Caco-2 (cell line): ENCODE measurements at regions of chr22 and their contacts with region 1.

Region 1: DNA sequence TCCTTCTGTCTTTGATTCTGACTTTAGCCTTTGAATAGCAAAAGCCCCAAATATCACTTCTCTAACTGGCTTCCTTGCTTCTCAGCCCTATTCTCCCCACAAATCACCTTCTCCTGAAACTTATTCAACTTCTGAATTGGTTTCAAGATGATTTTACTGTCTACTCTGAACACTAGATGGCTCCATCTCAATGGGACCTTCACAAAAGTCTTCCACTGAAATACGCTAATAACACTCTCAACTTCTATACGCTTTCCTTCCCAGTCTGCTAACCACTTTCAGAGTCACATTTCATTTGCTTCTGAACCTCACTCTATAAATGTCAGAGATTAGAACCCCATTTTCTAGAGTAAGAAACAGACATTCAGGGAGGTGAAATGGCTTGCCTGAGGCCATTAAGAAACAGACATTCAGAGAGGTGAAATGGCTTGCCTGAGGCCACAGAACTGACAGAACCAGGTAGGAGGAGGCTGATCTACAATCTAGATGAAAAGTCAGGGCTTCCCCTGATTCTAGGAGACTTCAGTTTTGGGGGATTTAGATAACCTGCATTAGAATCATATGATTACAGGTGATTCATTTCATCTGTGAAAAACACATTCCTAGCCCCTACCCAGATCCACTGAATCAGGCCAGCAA is 20.6 kb downstream of the MORC2 start:
- DNase-seq: peak in 1 of 2 experiments; percentile 20
- H3K4me3 ChIP-seq: no peak overlapping the region
- H3K4me3 Mint-ChIP-seq: no peak overlapping the region
- H3K27ac Mint-ChIP-seq: no peak overlapping the region
- H3K4me1 ChIP-seq: no peaks in the 10 kb centered on the region
- H3K4me1 Mint-ChIP-seq: no peaks in the 10 kb centered on the region
- H3K27me3 ChIP-seq: no peaks in the 10 kb centered on the region
- H3K27me3 Mint-ChIP-seq: no peaks in the 10 kb centered on the region
- CTCF ChIP-seq: peak; percentile 34 to 52

Region 2: GRCh38 chr22:30920407-30920806 is 27.5 kb before region 1 on chr22:
- CTCF ChIA-PET with region 1: no interaction called
- POLR2A ChIA-PET with region 1: no interaction called
- intact Hi-C with region 1: no loop called
- DNase-seq: peak; percentile 73 to 84
- H3K4me3 ChIP-seq: peak overlapping the region; percentile 49
- H3K4me3 Mint-ChIP-seq: peak overlapping the region; percentile 60
- H3K27ac Mint-ChIP-seq: no peak overlapping the region
- H3K4me1 ChIP-seq: no peaks in the 10 kb centered on the region
- H3K4me1 Mint-ChIP-seq: peaks cover 5% of the 10 kb centered on the region
- H3K27me3 ChIP-seq: no peaks in the 10 kb centered on the region
- H3K27me3 Mint-ChIP-seq: no peaks in the 10 kb centered on the region
- CTCF ChIP-seq: peak; percentile 91 to 93

Region 3: GRCh38 chr22:30989474-30989873 is 41.5 kb after region 1 on chr22:
- CTCF ChIA-PET with region 1: no interaction called
- POLR2A ChIA-PET with region 1: no interaction called
- intact Hi-C with region 1: no loop called
- DNase-seq: no peak
- H3K4me3 ChIP-seq: no peak overlapping the region
- H3K4me3 Mint-ChIP-seq: no peak overlapping the region
- H3K27ac Mint-ChIP-seq: no peak overlapping the region
- H3K4me1 ChIP-seq: no peaks in the 10 kb centered on the region
- H3K4me1 Mint-ChIP-seq: peaks cover 4% of the 10 kb centered on the region
- H3K27me3 ChIP-seq: no peaks in the 10 kb centered on the region
- H3K27me3 Mint-ChIP-seq: no peaks in the 10 kb centered on the region
- CTCF ChIP-seq: no peak

Region 4: DNA sequence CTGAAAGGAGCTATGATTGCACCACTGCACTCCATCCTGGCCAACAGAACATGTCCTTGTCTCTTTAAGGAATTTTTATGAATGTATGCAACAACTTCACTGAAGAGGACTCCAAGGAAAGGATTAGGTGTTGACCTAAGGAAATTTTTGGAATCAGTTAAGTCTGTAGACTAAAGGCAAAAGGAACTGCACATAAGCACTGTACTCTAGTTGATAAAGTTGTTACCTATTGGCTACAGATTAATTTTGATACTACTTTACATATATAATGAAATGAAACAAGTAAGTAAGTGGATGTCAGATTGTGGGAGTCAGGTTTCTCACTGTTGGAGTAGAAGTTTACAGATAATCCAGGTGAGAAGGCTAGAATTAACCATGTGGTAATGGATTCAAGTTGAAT is 57.6 kb after region 1 on chr22:
- CTCF ChIA-PET with region 1: no interaction called
- POLR2A ChIA-PET with region 1: no interaction called
- intact Hi-C with region 1: no loop called
- DNase-seq: no peak
- H3K4me3 ChIP-seq: no peak overlapping the region
- H3K4me3 Mint-ChIP-seq: no peak overlapping the region
- H3K27ac Mint-ChIP-seq: no peak overlapping the region
- H3K4me1 ChIP-seq: no peaks in the 10 kb centered on the region
- H3K4me1 Mint-ChIP-seq: no peaks in the 10 kb centered on the region
- H3K27me3 ChIP-seq: no peaks in the 10 kb centered on the region
- H3K27me3 Mint-ChIP-seq: peaks cover 2% of the 10 kb centered on the region
- CTCF ChIP-seq: no peak

Region 5: GRCh38 chr22:31036671-31037550 is 89.0 kb after region 1 on chr22:
- CTCF ChIA-PET with region 1: interaction called, 11 read pairs
- POLR2A ChIA-PET with region 1: no interaction called
- intact Hi-C with region 1: no loop called
- DNase-seq: no peak
- H3K4me3 ChIP-seq: no peak overlapping the region
- H3K4me3 Mint-ChIP-seq: no peak overlapping the region
- H3K27ac Mint-ChIP-seq: no peak overlapping the region
- H3K4me1 ChIP-seq: no peaks in the 10 kb centered on the region
- H3K4me1 Mint-ChIP-seq: no peaks in the 10 kb centered on the region
- H3K27me3 ChIP-seq: no peaks in the 10 kb centered on the region
- H3K27me3 Mint-ChIP-seq: no peaks in the 10 kb centered on the region
- CTCF ChIP-seq: no peak

Region 6: GRCh38 chr22:31068970-31069369 is 121.0 kb after region 1 on chr22:
- CTCF ChIA-PET with region 1: no interaction called
- POLR2A ChIA-PET with region 1: no interaction called
- intact Hi-C with region 1: no loop called
- DNase-seq: no peak
- H3K4me3 ChIP-seq: no peak overlapping the region
- H3K4me3 Mint-ChIP-seq: no peak overlapping the region
- H3K27ac Mint-ChIP-seq: no peak overlapping the region
- H3K4me1 ChIP-seq: peaks cover 16% of the 10 kb centered on the region; the same call in 1 of the 2 replicates
- H3K4me1 Mint-ChIP-seq: peaks cover 25% of the 10 kb centered on the region
- H3K27me3 ChIP-seq: no peaks in the 10 kb centered on the region
- H3K27me3 Mint-ChIP-seq: no peaks in the 10 kb centered on the region
- CTCF ChIP-seq: no peak